Right cardiac atrium (tissue), 5 donors: ENCODE measurements at regions of chr11 and their contacts with region 1.

Region 1: GRCh38 chr11:68297812-68298658 is 14.4 kb upstream of the LRP5 start:
- DNase-seq: peak; percentile 80 to 93 (median 92)
- ATAC-seq: peak; percentile 95 to 97
- H3K4me3 ChIP-seq: no peak overlapping the region
- H3K27ac ChIP-seq: no peak overlapping the region
- H3K4me1 ChIP-seq: no peaks in the 10 kb centered on the region
- H3K27me3 ChIP-seq: no peaks in the 10 kb centered on the region

Region 2: GRCh38 chr11:68213555-68214174 is 84.4 kb before region 1 on chr11:
- intact Hi-C with region 1: loop called in 1 of 4 experiments (anchors 10 kb)
- DNase-seq: peak; percentile 90 to 96 (median 95)
- ATAC-seq: peak; percentile 68 to 70
- H3K4me3 ChIP-seq: peak overlapping the region; percentile 98
- H3K27ac ChIP-seq: peak overlapping the region; percentile 98
- H3K4me1 ChIP-seq: peaks cover 7% of the 10 kb centered on the region
- H3K27me3 ChIP-seq: no peaks in the 10 kb centered on the region

Region 3: DNA sequence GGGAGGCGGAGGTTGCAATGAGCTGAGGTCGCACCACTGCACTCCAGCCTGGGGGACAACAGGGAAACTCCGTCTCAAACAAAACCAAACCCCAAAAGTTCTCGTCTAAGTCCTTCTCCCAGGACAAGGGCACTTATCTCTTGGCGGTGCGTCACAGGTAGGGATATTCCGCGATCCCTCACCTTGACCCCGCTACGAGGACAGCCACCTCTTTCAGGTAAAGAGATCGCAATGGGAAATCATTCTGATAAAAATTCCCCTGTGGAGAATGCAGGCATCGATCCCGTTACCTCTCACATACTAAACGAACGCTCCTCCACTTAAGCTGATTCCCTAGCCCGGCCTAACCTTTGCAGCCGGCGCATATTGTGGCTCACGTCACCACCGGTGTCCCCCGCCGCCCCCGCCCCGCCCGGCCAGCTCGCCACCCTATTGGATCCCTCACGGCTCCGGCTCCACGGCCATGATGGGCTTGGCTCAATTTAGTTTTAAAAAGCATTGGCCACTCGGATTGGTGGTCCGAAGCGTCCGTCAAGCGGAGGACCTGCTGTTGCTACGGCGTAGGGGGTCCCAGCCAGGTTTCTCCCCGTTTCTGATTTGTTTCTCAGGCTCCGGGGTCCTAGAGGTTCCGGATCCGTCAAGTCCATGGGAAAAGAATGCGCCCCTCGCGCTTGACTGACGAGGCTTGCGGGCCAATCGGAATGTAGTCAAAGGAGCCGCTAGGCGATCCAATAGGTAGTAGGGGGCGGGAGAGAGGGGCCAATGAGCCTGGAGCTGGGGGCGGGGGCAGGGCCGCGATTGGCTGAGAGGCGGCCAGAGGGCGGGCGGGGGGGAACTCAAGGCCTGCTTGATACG is 162.1 kb after region 1 on chr11:
- intact Hi-C with region 1: no loop called
- DNase-seq: peak; percentile 98 to 99 (median 98)
- ATAC-seq: peak; percentile 95 to 96
- H3K4me3 ChIP-seq: peak overlapping the region; percentile 97
- H3K27ac ChIP-seq: peak overlapping the region; percentile 98
- H3K4me1 ChIP-seq: peaks cover 12% of the 10 kb centered on the region
- H3K27me3 ChIP-seq: no peaks in the 10 kb centered on the region